ENCODE measurements at regions of chr19 and their contacts with region 1.

Region 1: GRCh38 chr19:47035127-47036096 is 13.0 kb downstream of the TMEM160 start:
- DNase-seq: peak; percentile 99
- ATAC-seq: peak; percentile 98
- H3K4me3 Mint-ChIP-seq: peak overlapping the region; percentile 95
- H3K27ac Mint-ChIP-seq: peak overlapping the region; percentile 80
- H3K4me1 Mint-ChIP-seq: peaks cover 17% of the 10 kb centered on the region
- H3K27me3 Mint-ChIP-seq: peaks cover 9% of the 10 kb centered on the region
- CTCF ChIP-seq: peak; percentile 87

Region 2: DNA sequence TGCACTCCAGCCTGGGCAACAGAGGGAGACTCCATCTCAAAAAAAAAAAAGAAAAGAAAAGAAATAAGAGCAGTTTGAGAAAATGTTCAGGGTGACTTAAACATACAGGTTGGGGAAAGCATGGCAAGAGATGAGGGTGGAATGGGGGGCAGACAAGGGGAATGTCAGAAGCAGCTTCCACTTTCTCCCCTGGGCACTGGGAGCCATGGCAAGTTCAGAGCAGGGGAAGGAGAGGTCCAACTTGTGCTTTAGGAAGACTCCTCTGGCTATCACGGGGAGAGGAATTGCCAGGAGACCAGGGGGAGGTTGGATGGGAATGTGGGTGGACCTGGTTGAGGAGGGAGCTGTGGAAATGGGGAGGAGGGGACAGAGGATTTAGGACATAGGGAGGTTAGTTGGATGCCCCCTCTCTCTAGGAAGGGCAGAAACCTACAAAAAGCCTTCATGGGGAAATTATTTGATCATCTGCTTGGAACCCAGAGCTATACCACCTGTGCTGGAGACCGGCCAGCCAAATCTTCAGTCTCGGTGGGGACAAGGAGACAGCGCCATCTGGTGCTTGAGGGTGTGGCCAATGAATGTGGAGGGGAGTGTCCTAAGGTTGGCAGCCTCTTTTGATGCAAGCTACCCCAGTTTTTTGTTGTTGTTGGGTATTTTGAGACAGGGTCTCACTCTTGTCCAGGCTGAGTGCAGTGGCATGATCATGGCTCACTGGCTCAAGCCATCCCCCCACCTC is 281.8 kb before region 1 on chr19:
- CTCF ChIA-PET with region 1: no interaction called
- POLR2A ChIA-PET with region 1: interaction called, 3 read pairs
- intact Hi-C with region 1: loop called (anchors 2 kb)
- DNase-seq: peak; percentile 48
- ATAC-seq: peak; percentile 87
- H3K4me3 Mint-ChIP-seq: no peak overlapping the region
- H3K27ac Mint-ChIP-seq: no peak overlapping the region
- H3K4me1 Mint-ChIP-seq: peaks cover 24% of the 10 kb centered on the region
- H3K27me3 Mint-ChIP-seq: no peaks in the 10 kb centered on the region
- CTCF ChIP-seq: no peak

Region 3: GRCh38 chr19:47013041-47013517 is 22.3 kb before region 1 on chr19:
- CTCF ChIA-PET with region 1: interaction called, 15 read pairs
- POLR2A ChIA-PET with region 1: no interaction called
- intact Hi-C with region 1: loop called (anchors 1 kb)
- DNase-seq: peak; percentile 69
- ATAC-seq: peak; percentile 82
- H3K4me3 Mint-ChIP-seq: no peak overlapping the region
- H3K27ac Mint-ChIP-seq: no peak overlapping the region
- H3K4me1 Mint-ChIP-seq: peaks cover 8% of the 10 kb centered on the region
- H3K27me3 Mint-ChIP-seq: peaks cover 7% of the 10 kb centered on the region
- CTCF ChIP-seq: peak; percentile 99

Region 4: DNA sequence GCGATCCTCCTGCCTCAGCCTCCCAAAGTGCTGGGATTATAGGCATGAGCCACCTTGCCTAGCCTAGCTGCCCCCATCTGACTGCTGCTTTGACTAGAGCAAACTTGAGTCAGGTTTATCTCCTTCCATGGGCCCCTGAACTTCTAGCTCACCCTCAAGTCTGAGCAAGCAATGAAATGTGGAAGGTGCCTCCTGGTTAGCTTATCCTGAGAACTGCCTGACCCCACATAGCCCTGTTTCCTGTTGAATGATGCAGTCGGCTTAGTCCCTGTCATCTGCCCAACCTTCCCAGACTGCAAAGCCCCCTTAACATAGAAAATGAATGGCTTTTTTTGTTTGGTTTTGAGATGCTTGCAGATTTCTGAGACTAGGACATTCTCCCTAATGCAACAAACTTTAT is 21.9 kb after region 1 on chr19:
- CTCF ChIA-PET with region 1: no interaction called
- POLR2A ChIA-PET with region 1: no interaction called
- intact Hi-C with region 1: no loop called
- DNase-seq: no peak
- ATAC-seq: no peak
- H3K4me3 Mint-ChIP-seq: no peak overlapping the region
- H3K27ac Mint-ChIP-seq: no peak overlapping the region
- H3K4me1 Mint-ChIP-seq: no peaks in the 10 kb centered on the region
- H3K27me3 Mint-ChIP-seq: peaks cover 8% of the 10 kb centered on the region
- CTCF ChIP-seq: no peak

Region 5: GRCh38 chr19:47075179-47075810 is 39.9 kb after region 1 on chr19:
- CTCF ChIA-PET with region 1: no interaction called
- POLR2A ChIA-PET with region 1: no interaction called
- intact Hi-C with region 1: loop called (anchors 5 kb)
- DNase-seq: no peak
- ATAC-seq: no peak
- H3K4me3 Mint-ChIP-seq: no peak overlapping the region
- H3K27ac Mint-ChIP-seq: no peak overlapping the region
- H3K4me1 Mint-ChIP-seq: peaks cover 4% of the 10 kb centered on the region
- H3K27me3 Mint-ChIP-seq: no peaks in the 10 kb centered on the region
- CTCF ChIP-seq: no peak

Region 6: GRCh38 chr19:47089767-47090350 is 54.4 kb after region 1 on chr19:
- CTCF ChIA-PET with region 1: no interaction called
- POLR2A ChIA-PET with region 1: no interaction called
- intact Hi-C with region 1: no loop called
- DNase-seq: no peak
- ATAC-seq: no peak
- H3K4me3 Mint-ChIP-seq: no peak overlapping the region
- H3K27ac Mint-ChIP-seq: no peak overlapping the region
- H3K4me1 Mint-ChIP-seq: peaks cover 31% of the 10 kb centered on the region
- H3K27me3 Mint-ChIP-seq: no peaks in the 10 kb centered on the region
- CTCF ChIP-seq: no peak

Region 7: GRCh38 chr19:47130591-47131227 is 95.3 kb after region 1 on chr19 and contains the start of gene SAE1:
- CTCF ChIA-PET with region 1: interaction called, 17 read pairs
- POLR2A ChIA-PET with region 1: interaction called, 14 read pairs
- intact Hi-C with region 1: loop called (anchors 1 kb)
- DNase-seq: peak; percentile 94
- ATAC-seq: peak; percentile 89
- H3K4me3 Mint-ChIP-seq: peak within 1 kb of the TSS; percentile 99
- H3K27ac Mint-ChIP-seq: peak within 1 kb of the TSS; percentile 94
- H3K4me1 Mint-ChIP-seq: peaks cover 44% of the 10 kb centered on the region
- H3K27me3 Mint-ChIP-seq: no peaks in the 10 kb centered on the region
- CTCF ChIP-seq: no peak
- total RNA-seq, gene SAE1: 64.5 and 67.4 TPM in 2 replicates

Region 8: GRCh38 chr19:47190167-47190727 is 154.8 kb after region 1 on chr19:
- CTCF ChIA-PET with region 1: no interaction called
- POLR2A ChIA-PET with region 1: no interaction called
- intact Hi-C with region 1: no loop called
- DNase-seq: no peak
- ATAC-seq: no peak
- H3K4me3 Mint-ChIP-seq: no peak overlapping the region
- H3K27ac Mint-ChIP-seq: no peak overlapping the region
- H3K4me1 Mint-ChIP-seq: peaks cover 20% of the 10 kb centered on the region
- H3K27me3 Mint-ChIP-seq: no peaks in the 10 kb centered on the region
- CTCF ChIP-seq: no peak